HepG2 (cell line): ENCODE measurements at regions of chr20 and their contacts with region 1.

Region 1: DNA sequence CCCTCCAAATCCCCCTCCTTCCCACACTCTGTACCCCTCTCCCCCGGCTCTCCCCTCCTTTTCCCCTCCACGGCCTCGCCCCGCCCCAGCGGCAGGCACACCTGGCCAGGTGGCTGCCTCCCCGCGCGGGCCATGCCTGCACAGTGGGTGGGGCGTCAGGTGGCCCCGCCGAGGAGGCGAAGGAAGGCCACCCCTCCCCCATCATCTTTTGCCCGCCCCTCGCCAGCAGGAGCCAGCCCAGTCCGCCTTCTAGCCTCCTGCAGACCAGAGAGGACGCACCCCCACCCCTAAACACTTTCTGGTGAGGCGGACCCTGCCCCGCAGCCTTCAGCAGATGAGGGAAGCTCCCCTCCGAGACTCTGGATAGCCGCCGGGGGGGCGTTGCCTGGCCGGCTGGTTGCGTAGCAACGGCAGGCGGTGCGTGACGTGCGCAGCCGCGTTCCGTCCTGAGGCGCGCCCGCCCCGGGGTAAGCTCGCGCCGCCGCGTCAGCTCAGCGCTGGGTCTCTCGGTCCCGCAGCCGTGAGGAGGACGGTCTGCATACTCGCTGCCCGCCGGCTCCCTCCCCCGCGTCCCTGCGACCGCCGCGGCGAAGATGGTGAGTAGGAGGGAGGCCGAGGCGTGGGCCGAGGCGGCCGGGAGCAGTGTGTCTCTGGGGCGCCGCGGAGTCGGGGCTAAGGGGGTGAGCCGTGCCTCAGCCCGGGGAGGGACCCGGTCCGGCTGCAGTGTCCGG is at the start of gene DSTN:
- DNase-seq: peak; percentile 90
- ATAC-seq: peak; percentile 91
- H3K4me3 ChIP-seq: peak within 1 kb of the TSS; percentile 86 to 100 (median 94)
- H3K27ac ChIP-seq: peak within 1 kb of the TSS; percentile 61
- H3K4me1 ChIP-seq: peaks cover 39% of the 10 kb centered on the region
- H3K27me3 ChIP-seq: no peaks in the 10 kb centered on the region; a peak in 1 of 5 replicates
- CTCF ChIP-seq: no peak
- EP300 ChIP-seq: no peak
- POLR2A ChIP-seq: peak; percentile 81 to 83
- RAD21 ChIP-seq: no peak; the same call in none of the 2 replicates
- total RNA-seq, gene DSTN: 106 and 164 TPM in 2 replicates

Region 2: GRCh38 chr20:17406051-17406590 is 163.7 kb before region 1 on chr20:
- CTCF ChIA-PET with region 1: no interaction called
- POLR2A ChIA-PET with region 1: no interaction called
- in situ Hi-C with region 1: no loop called
- intact Hi-C with region 1: no loop called
- DNase-seq: no peak
- ATAC-seq: no peak
- H3K4me3 ChIP-seq: no peak overlapping the region
- H3K27ac ChIP-seq: no peak overlapping the region
- H3K4me1 ChIP-seq: no peaks in the 10 kb centered on the region
- H3K27me3 ChIP-seq: peaks cover 6 to 52% of the 10 kb centered on the region in 2 experiments
- CTCF ChIP-seq: no peak
- EP300 ChIP-seq: no peak
- POLR2A ChIP-seq: no peak
- RAD21 ChIP-seq: no peak

Region 3: DNA sequence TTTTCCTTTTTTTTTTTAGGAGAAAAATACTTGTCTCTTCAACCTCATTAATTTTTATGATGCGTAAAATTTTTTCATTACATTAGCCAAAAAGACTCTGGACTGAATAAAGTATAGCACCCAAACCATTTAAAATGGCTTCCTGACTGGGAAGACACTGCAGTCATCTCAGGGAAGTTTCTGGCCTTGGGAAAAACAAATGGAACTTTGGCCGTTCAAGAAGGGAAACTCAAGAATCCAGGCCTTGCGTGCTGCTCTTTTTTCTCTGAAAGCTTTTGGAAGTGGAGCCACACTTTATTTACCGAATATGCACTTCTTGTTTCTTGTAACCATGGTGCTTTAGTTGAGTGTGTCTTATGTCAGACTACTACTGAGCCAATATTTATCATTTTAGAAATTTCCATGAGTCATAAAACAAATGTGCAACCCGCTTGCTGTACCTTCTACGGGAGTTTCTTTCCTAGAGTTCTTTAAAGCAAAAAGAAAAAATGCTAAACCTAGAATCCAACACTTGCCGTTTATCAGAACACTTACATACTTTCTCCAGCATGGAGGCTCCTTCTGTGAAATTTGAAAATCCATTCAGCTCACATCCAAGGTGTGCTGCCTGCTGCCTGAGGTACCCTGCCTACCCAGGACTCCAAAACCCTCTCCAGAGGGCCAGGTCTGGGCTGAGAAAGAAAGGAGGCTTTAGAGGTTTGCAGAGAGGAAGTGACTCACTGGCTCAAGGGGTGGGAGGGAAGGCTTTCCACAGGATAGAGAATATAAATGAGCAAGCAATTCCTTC is 11.4 kb before region 1 on chr20:
- CTCF ChIA-PET with region 1: interaction called, 3 read pairs
- POLR2A ChIA-PET with region 1: interaction called, 33 read pairs
- in situ Hi-C with region 1: no loop called
- intact Hi-C with region 1: loop called (anchors 1 kb)
- DNase-seq: peak; percentile 83
- ATAC-seq: peak; percentile 72
- H3K4me3 ChIP-seq: peak overlapping the region in 2 of 3 experiments; percentile 19 to 27; a peak in 3 of 6 replicates
- H3K27ac ChIP-seq: peak overlapping the region; percentile 48
- H3K4me1 ChIP-seq: peaks cover 42% of the 10 kb centered on the region
- H3K27me3 ChIP-seq: no peaks in the 10 kb centered on the region
- CTCF ChIP-seq: no peak
- EP300 ChIP-seq: peak in 1 of 2 experiments; percentile 69; a peak in 2 of 4 replicates
- POLR2A ChIP-seq: peak in 1 of 2 experiments; percentile 42; a peak in 1 of 4 replicates
- RAD21 ChIP-seq: no peak

Region 4: GRCh38 chr20:17604852-17605660 is 35.3 kb after region 1 on chr20:
- CTCF ChIA-PET with region 1: no interaction called
- POLR2A ChIA-PET with region 1: interaction called, 19 read pairs
- in situ Hi-C with region 1: no loop called
- intact Hi-C with region 1: loop called (anchors 2 kb)
- DNase-seq: peak; percentile 80
- ATAC-seq: peak; percentile 73
- H3K4me3 ChIP-seq: 0 out of 6 replicates have a peak overlapping the region, but pooled peaks of 1 of the 3 experiments have one; percentile 8
- H3K27ac ChIP-seq: peak overlapping the region; percentile 49
- H3K4me1 ChIP-seq: peaks cover 35% of the 10 kb centered on the region
- H3K27me3 ChIP-seq: no peaks in the 10 kb centered on the region
- CTCF ChIP-seq: peak; percentile 38
- EP300 ChIP-seq: peak in 1 of 2 experiments; percentile 71; a peak in 1 of 4 replicates
- POLR2A ChIP-seq: 0 out of 4 replicates have a peak, but pooled peaks of 1 of the 2 experiments have one; percentile 17
- RAD21 ChIP-seq: peak; percentile 44

Region 5: GRCh38 chr20:17749975-17750721 is 180.4 kb after region 1 on chr20:
- CTCF ChIA-PET with region 1: no interaction called
- POLR2A ChIA-PET with region 1: no interaction called
- in situ Hi-C with region 1: no loop called
- intact Hi-C with region 1: no loop called
- DNase-seq: peak; percentile 52
- ATAC-seq: peak; percentile 71
- H3K4me3 ChIP-seq: peak overlapping the region; percentile 27 to 66 (median 31)
- H3K27ac ChIP-seq: no peak overlapping the region
- H3K4me1 ChIP-seq: peaks cover 54% of the 10 kb centered on the region
- H3K27me3 ChIP-seq: peaks cover 3 to 26% of the 10 kb centered on the region in 2 experiments; a peak in 4 of 5 replicates
- CTCF ChIP-seq: no peak; the same call in none of the 2 replicates
- EP300 ChIP-seq: no peak
- POLR2A ChIP-seq: no peak
- RAD21 ChIP-seq: no peak

Region 6: GRCh38 chr20:18007534-18008292 is 437.9 kb after region 1 on chr20:
- CTCF ChIA-PET with region 1: no interaction called
- POLR2A ChIA-PET with region 1: no interaction called
- in situ Hi-C with region 1: no loop called
- intact Hi-C with region 1: no loop called
- DNase-seq: no peak
- ATAC-seq: peak; percentile 42
- H3K4me3 ChIP-seq: peak overlapping the region in 1 of 3 experiments; percentile 42; a peak in 2 of 6 replicates
- H3K27ac ChIP-seq: no peak overlapping the region
- H3K4me1 ChIP-seq: peaks cover 70% of the 10 kb centered on the region
- H3K27me3 ChIP-seq: peaks cover 7 to 42% of the 10 kb centered on the region in 2 experiments; a peak in 4 of 5 replicates
- CTCF ChIP-seq: no peak
- EP300 ChIP-seq: no peak
- POLR2A ChIP-seq: no peak
- RAD21 ChIP-seq: no peak